GM13977 (cell line): ENCODE measurements at regions of chr6 and their contacts with region 1.

Region 1: GRCh38 chr6:133553652-133554051 is 312.5 kb downstream of the EYA4 start:
- DNase-seq: peak; percentile 23
- CTCF ChIP-seq: peak; percentile 66

Region 2: DNA sequence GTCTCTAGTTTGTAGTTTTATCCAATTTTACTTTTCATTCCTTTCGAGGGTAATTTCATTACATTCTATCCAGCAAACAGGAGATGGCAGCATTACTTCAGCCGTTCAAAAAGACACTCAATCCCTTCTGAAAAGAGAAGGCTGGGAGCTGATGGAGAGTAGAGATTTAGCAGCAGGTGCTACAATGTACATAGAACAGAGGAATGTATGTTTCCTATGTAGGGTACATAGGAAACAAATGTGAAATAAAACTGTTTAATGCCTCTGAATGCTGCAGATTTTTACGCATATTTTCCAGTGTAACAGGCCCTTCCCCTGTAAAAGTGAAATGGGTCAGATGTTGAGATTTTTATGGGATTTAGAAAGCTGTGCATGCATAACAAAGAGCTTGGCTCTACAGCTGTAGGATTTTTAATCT is 723.3 kb before region 1 on chr6:
- in situ Hi-C with region 1: loop called (anchors 10 kb)
- DNase-seq: peak; percentile 24
- CTCF ChIP-seq: peak; percentile 66